Mammary epithelial cell (primary cell): ENCODE measurements at regions of chr17 and their contacts with region 1.

Region 1: GRCh38 chr17:28854457-28855350 is at the start of gene ERAL1:
- DNase-seq: peak; percentile 85
- H3K4me3 ChIP-seq: peak within 1 kb of the TSS; percentile 61 to 82 (median 69)
- H3K27ac ChIP-seq: peak within 1 kb of the TSS; percentile 43
- H3K4me1 ChIP-seq: peaks cover 12% of the 10 kb centered on the region
- H3K27me3 ChIP-seq: no peaks in the 10 kb centered on the region
- CTCF ChIP-seq: peak in 1 of 2 donors; percentile 8
- total RNA-seq, gene ERAL1: 48.4 to 53.2 TPM

Region 2: GRCh38 chr17:28777178-28777577 is 77.5 kb before region 1 on chr17:
- CTCF ChIA-PET with region 1: no interaction called
- dilution Hi-C with region 1: no loop called
- in situ Hi-C with region 1: no loop called
- intact Hi-C with region 1: no loop called
- DNase-seq: peak; percentile 72
- H3K4me3 ChIP-seq: peak overlapping the region in 2 of 3 experiments; percentile 6 to 36
- H3K27ac ChIP-seq: peak overlapping the region; percentile 66
- H3K4me1 ChIP-seq: peaks cover 25% of the 10 kb centered on the region
- H3K27me3 ChIP-seq: no peaks in the 10 kb centered on the region
- CTCF ChIP-seq: no peak

Region 3: GRCh38 chr17:28842282-28843012 is 12.3 kb before region 1 on chr17 and contains the start of gene FAM222B:
- CTCF ChIA-PET with region 1: no interaction called
- dilution Hi-C with region 1: no loop called
- in situ Hi-C with region 1: no loop called
- intact Hi-C with region 1: loop called (anchors 1 kb)
- DNase-seq: peak; percentile 76
- H3K4me3 ChIP-seq: peak within 1 kb of the TSS; percentile 84 to 95 (median 91)
- H3K27ac ChIP-seq: peak within 1 kb of the TSS; percentile 54
- H3K4me1 ChIP-seq: peaks cover 3% of the 10 kb centered on the region
- H3K27me3 ChIP-seq: no peaks in the 10 kb centered on the region
- CTCF ChIP-seq: no peak
- total RNA-seq, gene FAM222B: 11.0 to 28.9 TPM